ENCODE measurements at regions of chr1 and their contacts with region 1.

Region 1: DNA sequence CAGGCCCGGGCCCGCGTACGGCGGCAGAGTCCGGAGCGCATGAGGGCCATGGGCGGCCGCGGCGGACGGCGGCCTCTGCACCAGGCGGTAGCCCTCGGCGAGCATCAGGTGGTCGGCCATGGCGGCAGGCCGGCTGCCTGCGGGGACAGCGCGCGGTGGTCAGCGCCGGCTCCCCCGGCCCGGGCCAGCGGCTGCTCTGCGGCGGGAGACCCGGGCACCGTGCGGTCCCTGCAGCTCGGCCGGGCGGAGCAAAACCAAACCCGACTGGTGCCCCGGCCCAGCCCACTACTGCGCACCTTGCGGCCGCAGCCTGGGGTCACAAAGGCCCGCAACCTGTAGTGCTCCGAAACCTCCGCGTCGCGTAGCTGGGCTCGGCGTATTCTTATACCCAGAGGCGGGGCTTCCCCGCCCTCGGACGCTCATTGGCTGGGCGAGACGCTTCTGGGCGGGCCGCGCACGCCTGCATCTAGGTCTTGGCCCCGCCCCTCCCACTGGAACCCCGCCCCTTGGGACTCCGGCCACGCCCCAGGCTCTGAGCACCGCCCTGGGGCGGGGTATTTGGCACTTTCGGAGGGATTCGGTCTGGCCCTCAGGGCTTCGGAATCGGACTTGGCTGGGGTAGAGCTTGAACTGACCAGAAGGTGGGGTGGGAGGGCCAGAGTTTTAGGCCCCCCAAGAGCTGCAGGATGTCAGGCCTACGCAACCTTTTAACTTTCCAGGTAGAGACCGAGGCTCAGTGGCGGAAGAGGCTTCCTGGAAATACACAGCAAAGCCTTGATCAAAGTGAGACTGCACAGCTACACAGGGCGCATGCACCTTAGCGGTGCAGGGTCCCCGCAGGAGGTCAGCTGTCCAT is at the start of gene CITED4:
- DNase-seq: peak; percentile 96
- H3K4me3 Mint-ChIP-seq: peak within 1 kb of the TSS; percentile 88
- H3K27ac Mint-ChIP-seq: peak within 1 kb of the TSS; percentile 88
- H3K4me1 Mint-ChIP-seq: peaks cover 30% of the 10 kb centered on the region
- H3K27me3 Mint-ChIP-seq: no peaks in the 10 kb centered on the region
- CTCF ChIP-seq: peak; percentile 25
- total RNA-seq, gene CITED4: 22.5 and 43.5 TPM in 2 replicates

Region 2: GRCh38 chr1:40755067-40755466 is 107.2 kb before region 1 on chr1:
- CTCF ChIA-PET with region 1: no interaction called
- POLR2A ChIA-PET with region 1: no interaction called
- intact Hi-C with region 1: no loop called
- DNase-seq: peak; percentile 96
- H3K4me3 Mint-ChIP-seq: no peak overlapping the region
- H3K27ac Mint-ChIP-seq: peak overlapping the region; percentile 53
- H3K4me1 Mint-ChIP-seq: peaks cover 29% of the 10 kb centered on the region
- H3K27me3 Mint-ChIP-seq: no peaks in the 10 kb centered on the region
- CTCF ChIP-seq: no peak

Region 3: GRCh38 chr1:40840526-40841323 is 21.5 kb before region 1 on chr1:
- CTCF ChIA-PET with region 1: no interaction called
- POLR2A ChIA-PET with region 1: no interaction called
- intact Hi-C with region 1: no loop called
- DNase-seq: no peak
- H3K4me3 Mint-ChIP-seq: no peak overlapping the region
- H3K27ac Mint-ChIP-seq: no peak overlapping the region
- H3K4me1 Mint-ChIP-seq: no peaks in the 10 kb centered on the region
- H3K27me3 Mint-ChIP-seq: no peaks in the 10 kb centered on the region
- CTCF ChIP-seq: no peak

Region 4: GRCh38 chr1:40877698-40878097 is 15.5 kb after region 1 on chr1:
- CTCF ChIA-PET with region 1: interaction called, 7 read pairs
- POLR2A ChIA-PET with region 1: interaction called, 13 read pairs
- intact Hi-C with region 1: no loop called
- DNase-seq: peak; percentile 96
- H3K4me3 Mint-ChIP-seq: no peak overlapping the region
- H3K27ac Mint-ChIP-seq: peak overlapping the region; percentile 97
- H3K4me1 Mint-ChIP-seq: peaks cover 44% of the 10 kb centered on the region
- H3K27me3 Mint-ChIP-seq: no peaks in the 10 kb centered on the region
- CTCF ChIP-seq: no peak

Region 5: DNA sequence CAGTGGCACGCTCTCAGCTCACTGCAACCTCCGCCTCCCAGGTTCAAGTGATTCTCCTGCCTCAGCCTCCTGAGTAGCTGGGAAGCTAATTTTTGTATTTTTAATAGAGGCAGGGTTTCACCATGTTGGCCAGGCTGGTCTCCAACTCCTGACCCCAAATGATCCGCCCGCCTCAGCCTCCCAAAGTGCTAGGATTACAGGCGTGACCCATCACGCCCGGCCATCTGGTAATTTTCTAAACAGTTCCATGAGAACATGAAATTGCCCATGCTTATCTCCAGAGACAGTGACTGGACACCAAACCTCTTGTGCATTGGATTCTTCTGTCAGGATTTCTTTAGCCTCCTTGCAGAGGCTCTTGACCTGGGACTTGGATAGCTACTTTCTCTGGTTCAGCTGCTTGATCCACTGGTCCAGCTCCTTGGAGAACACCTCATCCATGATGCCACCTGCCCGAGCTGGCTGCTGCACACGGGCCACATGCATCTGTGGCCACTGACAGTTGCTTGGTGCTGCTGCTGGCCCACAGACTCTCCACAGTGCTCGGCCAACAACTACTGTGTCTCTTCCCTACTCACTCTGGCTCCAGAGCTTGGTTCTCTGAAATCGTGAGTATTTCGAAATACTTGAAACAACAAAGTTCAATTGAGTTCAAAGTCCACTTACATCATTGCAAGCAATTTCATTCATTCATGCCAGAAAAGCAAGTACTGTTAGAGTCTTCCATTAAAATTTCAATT is 77.3 kb after region 1 on chr1:
- CTCF ChIA-PET with region 1: interaction called, 609 read pairs
- POLR2A ChIA-PET with region 1: interaction called, 26 read pairs
- intact Hi-C with region 1: loop called (anchors 1 kb)
- DNase-seq: peak; percentile 71
- H3K4me3 Mint-ChIP-seq: no peak overlapping the region
- H3K27ac Mint-ChIP-seq: no peak overlapping the region
- H3K4me1 Mint-ChIP-seq: peaks cover 25% of the 10 kb centered on the region
- H3K27me3 Mint-ChIP-seq: no peaks in the 10 kb centered on the region
- CTCF ChIP-seq: no peak

Region 6: GRCh38 chr1:41078616-41079015 is 216.4 kb after region 1 on chr1:
- CTCF ChIA-PET with region 1: no interaction called
- POLR2A ChIA-PET with region 1: no interaction called
- intact Hi-C with region 1: no loop called
- DNase-seq: no peak
- H3K4me3 Mint-ChIP-seq: no peak overlapping the region
- H3K27ac Mint-ChIP-seq: no peak overlapping the region
- H3K4me1 Mint-ChIP-seq: peaks cover 5% of the 10 kb centered on the region
- H3K27me3 Mint-ChIP-seq: no peaks in the 10 kb centered on the region
- CTCF ChIP-seq: no peak

Measured in MCF 10A (cell line).